A673 (cell line): ENCODE measurements at regions of chr13 and their contacts with region 1.

Region 1: GRCh38 chr13:28792992-28793391 is 27.1 kb upstream of the MTUS2 start:
- DNase-seq: no peak
- H3K4me3 ChIP-seq: no peak overlapping the region
- H3K27ac ChIP-seq: no peak overlapping the region
- H3K4me1 ChIP-seq: peaks cover 16% of the 10 kb centered on the region
- H3K27me3 ChIP-seq: no peaks in the 10 kb centered on the region
- CTCF ChIP-seq: no peak

Region 2: DNA sequence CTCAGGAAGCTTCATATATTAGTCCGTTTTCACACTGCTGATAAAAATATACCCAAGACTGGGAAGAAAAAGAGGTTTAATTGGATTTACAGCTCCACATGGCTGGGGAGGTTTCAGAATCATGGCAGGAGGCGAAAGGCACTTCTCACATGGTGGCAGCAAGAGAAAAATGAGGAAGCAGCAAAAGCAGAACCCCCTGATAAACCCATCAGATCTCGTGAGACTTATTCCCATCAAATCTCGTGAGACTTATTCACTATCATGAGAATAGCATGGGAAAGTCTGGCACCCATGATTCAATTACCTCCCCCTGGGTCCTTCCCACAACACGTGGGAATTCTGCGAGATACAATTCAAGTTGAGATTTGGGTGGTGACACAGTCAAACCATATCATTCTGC is 715.8 kb before region 1 on chr13:
- CTCF ChIA-PET with region 1: no interaction called
- POLR2A ChIA-PET with region 1: no interaction called
- intact Hi-C with region 1: no loop called
- DNase-seq: no peak
- H3K4me3 ChIP-seq: no peak overlapping the region
- H3K27ac ChIP-seq: no peak overlapping the region
- H3K4me1 ChIP-seq: no peaks in the 10 kb centered on the region
- H3K27me3 ChIP-seq: no peaks in the 10 kb centered on the region
- CTCF ChIP-seq: no peak

Region 3: DNA sequence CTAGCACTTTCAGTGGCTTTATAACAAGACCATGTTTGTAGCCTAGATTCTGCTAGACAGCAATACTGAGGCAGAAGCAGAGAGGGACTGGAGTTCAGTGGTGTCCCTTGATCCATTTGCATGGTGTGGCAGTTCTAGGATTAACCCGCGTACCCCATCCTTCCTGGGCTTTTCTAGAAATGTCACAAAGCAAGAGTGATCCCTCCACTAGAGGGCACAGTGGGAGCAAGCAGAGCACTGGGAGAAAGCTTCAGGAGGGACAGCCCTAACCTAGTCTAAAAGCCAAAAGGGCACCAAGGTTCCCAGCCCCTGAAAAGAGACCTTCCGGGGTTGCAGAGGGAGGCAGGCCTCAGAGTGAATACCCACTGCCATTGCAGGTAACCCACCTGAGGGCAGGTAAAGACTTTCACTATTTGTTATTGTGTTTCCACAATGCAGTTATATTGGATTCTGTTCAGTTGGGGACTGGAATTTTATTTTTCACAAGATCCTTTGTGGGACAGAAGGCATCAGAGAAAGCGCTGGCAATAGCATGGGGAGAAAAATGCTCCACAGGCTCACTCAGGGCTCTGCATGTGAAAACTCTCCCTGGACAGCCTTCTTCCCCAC is 468.7 kb before region 1 on chr13:
- CTCF ChIA-PET with region 1: interaction called, 15 read pairs
- POLR2A ChIA-PET with region 1: no interaction called
- intact Hi-C with region 1: loop called (anchors 5 kb)
- DNase-seq: peak; percentile 81
- H3K4me3 ChIP-seq: no peak overlapping the region
- H3K27ac ChIP-seq: no peak overlapping the region
- H3K4me1 ChIP-seq: peaks cover 12% of the 10 kb centered on the region
- H3K27me3 ChIP-seq: no peaks in the 10 kb centered on the region
- CTCF ChIP-seq: peak; percentile 90

Region 4: GRCh38 chr13:28607187-28607955 is 185.6 kb before region 1 on chr13:
- CTCF ChIA-PET with region 1: interaction called, 11 read pairs
- POLR2A ChIA-PET with region 1: no interaction called
- intact Hi-C with region 1: no loop called
- DNase-seq: no peak
- H3K4me3 ChIP-seq: no peak overlapping the region
- H3K27ac ChIP-seq: no peak overlapping the region
- H3K4me1 ChIP-seq: no peaks in the 10 kb centered on the region
- H3K27me3 ChIP-seq: no peaks in the 10 kb centered on the region
- CTCF ChIP-seq: no peak

Region 5: DNA sequence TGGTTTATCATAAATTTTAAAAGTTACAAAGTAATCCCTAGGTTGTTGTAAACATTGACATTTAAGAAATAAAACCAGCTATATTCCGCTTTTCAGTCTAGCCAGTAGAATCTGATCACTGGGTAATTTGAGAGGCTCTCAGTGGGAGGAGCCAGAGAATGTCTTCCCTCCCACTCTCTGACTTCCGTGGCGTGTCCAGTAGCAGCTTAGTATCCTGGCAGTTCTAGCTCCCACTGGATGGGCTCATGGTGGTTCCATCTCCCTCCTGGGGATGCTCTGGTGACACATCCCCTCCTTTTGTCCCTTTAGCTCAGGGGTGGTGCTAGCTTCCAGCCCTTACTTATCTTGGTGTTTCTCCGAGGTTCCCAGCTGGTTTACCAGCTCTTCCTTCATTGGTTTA is 61.7 kb after region 1 on chr13:
- CTCF ChIA-PET with region 1: interaction called, 11 read pairs
- POLR2A ChIA-PET with region 1: no interaction called
- intact Hi-C with region 1: no loop called
- DNase-seq: peak; percentile 43
- H3K4me3 ChIP-seq: no peak overlapping the region
- H3K27ac ChIP-seq: no peak overlapping the region
- H3K4me1 ChIP-seq: no peaks in the 10 kb centered on the region
- H3K27me3 ChIP-seq: peaks cover 19% of the 10 kb centered on the region
- CTCF ChIP-seq: no peak